ENCODE measurements at regions of chr3 and their contacts with region 1.

Region 1: DNA sequence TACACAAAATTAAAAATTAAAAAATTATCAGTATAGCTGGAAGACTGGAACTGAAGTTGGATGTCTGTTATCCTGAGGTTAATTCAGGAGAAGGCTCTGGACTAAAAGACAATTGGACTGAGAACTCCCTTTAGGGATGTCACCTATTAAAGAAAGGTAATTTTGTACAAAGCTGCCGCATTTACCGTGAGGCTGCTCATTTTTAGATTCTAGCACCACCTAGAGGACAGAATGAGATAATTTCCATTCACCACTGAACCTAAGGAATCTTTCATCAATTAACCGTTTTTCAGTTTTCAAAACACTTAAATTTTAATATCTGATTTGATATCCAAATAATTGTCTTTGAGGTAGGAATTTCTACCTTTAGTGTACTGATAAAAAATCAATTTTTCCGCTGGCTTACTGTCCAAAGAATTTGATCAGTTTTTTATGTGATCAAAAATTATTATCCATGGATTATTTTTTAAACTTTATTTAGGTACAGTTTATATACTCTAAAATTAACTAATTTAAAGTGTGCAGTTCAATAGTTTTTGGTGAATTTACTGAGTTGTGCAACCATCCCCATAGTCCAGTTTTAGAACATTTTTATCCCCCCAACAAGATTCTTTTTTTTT is 106.7 kb upstream of the TNIK start:
- DNase-seq: no peak
- H3K4me3 ChIP-seq: no peak overlapping the region
- H3K27ac ChIP-seq: no peak overlapping the region
- H3K27me3 ChIP-seq: no peaks in the 10 kb centered on the region
- CTCF ChIP-seq: peak; percentile 58 to 98 (median 87)

Region 2: DNA sequence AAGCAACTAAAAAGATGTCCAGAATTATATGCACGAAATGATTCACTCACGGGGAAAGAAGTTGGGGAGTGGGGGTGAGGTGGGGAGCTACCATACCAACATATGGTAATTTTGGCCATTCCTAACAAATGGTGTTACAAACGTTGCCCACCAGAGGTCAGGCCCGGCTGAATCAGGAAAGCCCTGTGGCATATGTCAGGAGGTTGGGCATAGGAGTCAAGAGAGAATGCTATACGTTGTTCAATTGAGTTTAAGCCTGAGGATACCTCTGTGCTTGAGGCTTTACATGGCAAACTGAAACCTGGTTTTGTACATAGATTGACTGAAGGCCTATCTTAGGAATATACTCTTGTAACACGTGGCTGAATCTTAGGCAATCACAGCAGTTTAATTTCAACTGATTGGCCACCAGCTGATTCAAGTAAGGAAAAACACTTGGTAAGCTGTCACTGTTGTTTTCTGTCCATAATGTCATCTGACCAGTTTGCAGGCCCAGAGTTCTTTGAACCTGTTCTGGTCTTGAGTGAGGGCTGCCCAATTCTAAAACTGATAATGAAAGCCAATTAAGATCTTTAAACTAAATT is 517.0 kb before region 1 on chr3:
- intact Hi-C with region 1: loop called (anchors 5 to 10 kb)
- DNase-seq: peak in 8 of 10 donors; percentile 18 to 62 (median 50)
- H3K4me3 ChIP-seq: no peak overlapping the region
- H3K27ac ChIP-seq: peak overlapping the region in 2 of 59 donors; percentile 6 to 18
- H3K27me3 ChIP-seq: no peaks in the 10 kb centered on the region
- CTCF ChIP-seq: peak in 55 of 56 donors; percentile 21 to 84 (median 66)

Region 3: DNA sequence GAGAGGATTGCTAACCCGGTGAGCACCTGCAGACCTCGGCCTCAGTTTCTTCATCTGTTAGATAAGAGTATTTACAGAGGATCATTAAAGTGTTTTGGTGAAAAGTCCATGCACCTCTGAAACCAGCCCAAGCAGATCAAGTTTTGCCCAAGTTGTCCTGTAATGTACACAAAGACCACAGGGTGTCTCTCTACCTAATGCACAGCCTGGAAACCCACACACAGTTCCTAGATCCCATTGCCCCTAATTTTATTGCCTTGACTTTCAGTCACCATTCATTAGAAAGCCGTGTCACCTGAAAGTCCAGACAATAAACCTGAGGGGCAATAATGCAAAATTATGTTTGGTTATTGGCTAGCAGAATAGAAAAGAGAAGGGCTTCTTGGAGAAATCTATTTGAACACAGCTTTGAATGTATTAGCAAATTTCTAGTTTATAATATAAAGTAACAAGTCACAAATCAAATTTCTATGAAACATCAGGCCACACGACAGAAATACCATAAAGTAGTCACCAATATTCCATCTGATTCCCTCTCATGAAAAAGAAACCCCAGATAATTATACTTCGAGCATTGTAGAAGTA is 379.1 kb before region 1 on chr3:
- intact Hi-C with region 1: loop called (anchors 2 to 5 kb)
- DNase-seq: no peak
- H3K4me3 ChIP-seq: no peak overlapping the region
- H3K27ac ChIP-seq: peak overlapping the region in 2 of 59 donors; percentile 29 to 38
- H3K27me3 ChIP-seq: no peaks in the 10 kb centered on the region
- CTCF ChIP-seq: peak; percentile 35 to 87 (median 73)